ENCODE measurements at regions of chr4 and their contacts with region 1.

Region 1: DNA sequence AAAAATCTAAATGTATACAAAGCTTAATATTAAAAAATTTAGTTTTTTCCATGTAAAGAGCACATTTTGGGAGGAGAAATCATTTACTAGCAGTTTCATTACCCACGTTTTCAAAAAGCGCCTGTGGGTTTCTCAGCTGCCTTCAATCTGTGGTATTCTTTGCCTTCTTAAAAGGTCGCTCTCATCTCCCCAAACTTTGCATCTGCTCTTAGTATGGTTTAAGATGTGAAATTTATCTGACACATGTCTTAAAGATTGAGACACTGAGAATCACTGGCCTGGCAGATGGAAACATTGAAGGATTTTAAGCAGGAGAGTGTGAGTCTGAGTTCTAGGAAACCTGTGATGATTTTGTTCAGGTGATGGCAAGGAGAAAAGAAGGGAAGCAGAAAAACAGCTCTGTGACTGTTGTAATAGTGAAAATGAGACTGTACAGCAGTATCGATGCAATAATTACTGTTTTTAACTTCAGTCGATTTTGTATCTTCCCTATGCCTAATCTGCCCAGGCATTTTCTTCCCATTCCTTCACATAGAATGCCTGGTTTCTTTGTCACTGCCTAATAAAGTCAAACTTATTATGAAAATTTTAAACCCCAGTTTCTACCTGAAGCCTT is 75.9 kb downstream of the PAQR3 start:
- DNase-seq: no peak
- H3K4me3 ChIP-seq: no peak overlapping the region
- H3K27ac ChIP-seq: no peak overlapping the region
- H3K4me1 ChIP-seq: no peaks in the 10 kb centered on the region
- H3K27me3 ChIP-seq: no peaks in the 10 kb centered on the region
- CTCF ChIP-seq: no peak

Region 2: GRCh38 chr4:78612398-78613178 is 250.8 kb before region 1 on chr4:
- intact Hi-C with region 1: loop called (anchors 2 kb)
- DNase-seq: no peak
- H3K4me3 ChIP-seq: no peak overlapping the region
- H3K27ac ChIP-seq: no peak overlapping the region
- H3K4me1 ChIP-seq: no peaks in the 10 kb centered on the region
- H3K27me3 ChIP-seq: no peaks in the 10 kb centered on the region
- CTCF ChIP-seq: peak; percentile 70 to 73

Region 3: GRCh38 chr4:79088946-79089691 is 225.8 kb after region 1 on chr4:
- intact Hi-C with region 1: no loop called
- DNase-seq: no peak
- H3K4me3 ChIP-seq: no peak overlapping the region
- H3K27ac ChIP-seq: no peak overlapping the region
- H3K4me1 ChIP-seq: no peaks in the 10 kb centered on the region
- H3K27me3 ChIP-seq: no peaks in the 10 kb centered on the region
- CTCF ChIP-seq: no peak

Region 4: DNA sequence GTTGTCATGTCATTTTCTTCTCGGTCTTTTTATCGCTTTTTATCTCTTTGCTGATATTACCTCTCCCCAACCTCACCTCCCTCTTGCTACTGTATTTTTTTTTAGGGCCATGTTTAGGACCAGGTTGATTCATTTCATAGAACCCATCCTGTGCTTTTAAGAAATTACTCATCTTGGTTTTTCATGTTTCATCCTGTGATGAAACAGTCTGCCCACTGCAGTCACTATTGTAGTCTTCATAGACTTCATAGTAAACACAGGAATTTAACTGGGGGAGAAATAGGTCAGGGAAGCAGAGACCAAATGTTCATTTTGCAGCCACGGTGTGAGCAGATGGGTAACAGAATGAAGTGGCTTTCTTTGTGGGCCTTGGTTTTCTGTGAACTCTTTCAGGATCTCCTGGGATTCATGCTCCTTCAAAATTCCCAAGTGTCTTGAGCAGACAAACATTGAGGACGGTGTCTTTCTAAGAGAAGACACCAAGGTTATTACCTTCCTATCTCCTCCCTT is 300.7 kb after region 1 on chr4:
- intact Hi-C with region 1: no loop called
- DNase-seq: no peak
- H3K4me3 ChIP-seq: no peak overlapping the region
- H3K27ac ChIP-seq: no peak overlapping the region
- H3K4me1 ChIP-seq: no peaks in the 10 kb centered on the region
- H3K27me3 ChIP-seq: no peaks in the 10 kb centered on the region
- CTCF ChIP-seq: no peak

Measured in tibial artery (tissue), 4 donors.